ENCODE measurements at regions of chr12 and their contacts with region 1.

Region 1: DNA sequence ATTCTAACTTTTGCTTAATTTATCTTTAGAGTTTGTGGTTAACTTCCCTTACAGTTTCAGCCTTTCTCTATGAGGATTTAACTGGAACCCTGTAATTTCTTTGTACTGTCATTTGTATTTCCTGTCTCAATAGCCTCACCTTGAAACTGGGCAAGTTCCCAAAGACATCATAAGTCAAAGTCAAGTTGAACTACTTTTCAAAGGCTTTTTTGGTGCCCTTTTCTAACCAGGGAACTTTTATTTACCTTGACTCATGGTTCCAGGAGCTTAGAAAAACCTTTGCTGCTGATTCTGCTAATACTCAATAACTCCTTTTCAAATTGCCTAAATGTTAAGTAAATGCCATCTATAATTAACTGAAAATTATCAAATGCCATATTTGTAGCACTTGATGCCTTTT is 200.8 kb upstream of the KRR1 start:
- DNase-seq: no peak
- H3K4me3 ChIP-seq: no peak overlapping the region
- H3K27ac ChIP-seq: no peak overlapping the region
- H3K4me1 ChIP-seq: peaks cover 48% of the 10 kb centered on the region
- H3K27me3 ChIP-seq: no peaks in the 10 kb centered on the region
- CTCF ChIP-seq: no peak

Region 2: DNA sequence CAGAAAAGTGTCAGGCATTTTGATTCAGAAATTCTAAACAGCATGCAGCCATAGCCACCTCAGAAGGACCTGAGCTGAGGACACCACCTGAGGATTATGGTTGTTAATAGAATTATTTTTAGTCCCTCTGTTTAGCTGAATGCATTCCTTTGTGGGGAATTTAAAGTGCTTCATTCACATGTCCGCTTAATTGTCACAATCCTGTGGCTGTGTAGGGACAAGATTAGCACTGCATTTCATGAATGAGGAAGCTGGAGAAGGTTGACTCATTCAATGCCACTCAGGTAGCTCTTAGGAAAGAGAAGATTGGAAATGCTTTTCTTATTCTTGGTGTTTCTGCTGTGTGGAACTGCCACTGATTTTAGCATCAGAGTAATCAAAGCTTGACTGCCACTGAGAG is 158.9 kb before region 1 on chr12:
- intact Hi-C with region 1: loop called (anchors 10 kb)
- DNase-seq: no peak
- H3K4me3 ChIP-seq: no peak overlapping the region
- H3K27ac ChIP-seq: peak overlapping the region; percentile 50
- H3K4me1 ChIP-seq: peaks cover 41% of the 10 kb centered on the region
- H3K27me3 ChIP-seq: no peaks in the 10 kb centered on the region
- CTCF ChIP-seq: no peak

Region 3: DNA sequence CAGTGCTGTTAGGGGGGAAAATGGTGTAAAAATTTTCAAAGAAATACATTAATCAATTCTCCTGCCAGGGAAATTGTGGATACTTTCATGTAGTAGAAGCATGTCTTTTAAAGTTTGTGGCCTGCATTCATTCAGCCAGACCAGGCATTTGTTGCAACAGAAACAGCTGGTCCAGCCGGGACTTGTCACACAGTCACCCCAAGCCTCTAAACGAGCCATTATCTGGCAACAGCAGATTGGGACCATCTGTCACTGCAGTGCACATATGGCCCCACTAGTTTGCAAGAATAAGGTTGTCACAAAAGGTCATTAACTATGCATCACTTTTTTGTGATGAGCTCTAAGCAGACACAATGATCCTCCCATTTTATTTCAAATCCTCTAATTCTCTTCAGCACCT is 125.4 kb after region 1 on chr12:
- intact Hi-C with region 1: no loop called
- DNase-seq: peak; percentile 38
- H3K4me3 ChIP-seq: no peak overlapping the region
- H3K27ac ChIP-seq: no peak overlapping the region
- H3K4me1 ChIP-seq: peaks cover 7% of the 10 kb centered on the region
- H3K27me3 ChIP-seq: no peaks in the 10 kb centered on the region
- CTCF ChIP-seq: no peak

Measured in left ventricle myocardium inferior (tissue), 1 donor.